ENCODE measurements at regions of chr11 and their contacts with region 1.

Region 1: GRCh38 chr11:2885676-2886081 is at the start of gene CDKN1C:
- DNase-seq: peak; percentile 92 to 97
- H3K4me3 ChIP-seq: peak within 1 kb of the TSS; percentile 86 to 90 (median 86)
- H3K27ac ChIP-seq: peak within 1 kb of the TSS; percentile 84 to 92 (median 87)
- H3K4me1 ChIP-seq: peaks cover 9 to 66% (median 58%) of the 10 kb centered on the region in 4 donors
- H3K27me3 ChIP-seq: peaks cover 0 to 19% (median 3%) of the 10 kb centered on the region in 3 donors
- CTCF ChIP-seq: no peak
- EP300 ChIP-seq: no peak
- POLR2A ChIP-seq: peak in 2 of 4 donors; percentile 47 to 57
- total RNA-seq, gene CDKN1C: 10.5 to 99.1 (median 14.2) TPM

Region 2: GRCh38 chr11:2041153-2041552 is 844.5 kb before region 1 on chr11:
- intact Hi-C with region 1: no loop called
- DNase-seq: no peak
- H3K4me3 ChIP-seq: no peak overlapping the region
- H3K27ac ChIP-seq: no peak overlapping the region
- H3K4me1 ChIP-seq: no peaks in the 10 kb centered on the region
- H3K27me3 ChIP-seq: peaks cover 0 to 8% (median 0%) of the 10 kb centered on the region in 3 donors
- CTCF ChIP-seq: no peak
- EP300 ChIP-seq: no peak
- POLR2A ChIP-seq: no peak

Region 3: DNA sequence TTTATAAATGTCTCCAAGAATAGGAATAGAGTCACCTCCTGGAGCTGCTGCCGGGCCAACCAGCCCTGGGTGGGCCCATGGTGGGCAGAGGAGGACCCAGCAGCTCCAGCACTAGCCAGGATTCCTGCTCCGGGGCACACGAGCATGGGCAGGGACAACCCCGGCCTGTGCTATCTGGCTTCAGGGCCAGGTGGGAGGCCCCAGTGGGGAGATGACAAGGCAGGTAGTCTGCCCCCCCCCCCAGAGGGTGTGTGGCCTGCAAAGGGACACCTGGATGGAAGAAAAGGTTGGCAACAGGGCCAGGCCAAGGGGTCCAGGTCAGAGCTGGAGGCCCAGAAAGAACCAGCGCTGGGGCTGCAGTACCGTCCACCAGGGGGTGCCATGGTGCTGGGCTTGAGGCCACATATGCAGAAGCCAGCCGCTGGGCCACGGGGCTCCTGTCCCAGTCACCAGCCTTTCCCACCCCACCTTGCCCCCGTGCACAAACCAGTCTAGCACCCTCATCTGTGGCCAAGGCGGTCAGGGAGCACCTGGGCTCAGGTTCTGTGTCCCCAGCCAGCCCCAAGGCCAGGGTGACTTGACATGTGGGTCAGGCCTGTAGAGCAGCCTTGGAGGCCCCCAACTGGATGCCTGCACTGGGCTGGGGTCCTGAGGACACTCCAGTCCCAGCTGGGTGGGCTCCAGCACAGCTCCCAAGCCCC is 580.4 kb before region 1 on chr11:
- intact Hi-C with region 1: loop called (anchors 10 kb)
- DNase-seq: peak; percentile 91 to 92
- H3K4me3 ChIP-seq: peak overlapping the region in 2 of 4 donors; percentile 5 to 18
- H3K27ac ChIP-seq: peak overlapping the region; percentile 37 to 89 (median 81)
- H3K4me1 ChIP-seq: peaks cover 54 to 78% (median 60%) of the 10 kb centered on the region in 4 donors
- H3K27me3 ChIP-seq: no peaks in the 10 kb centered on the region
- CTCF ChIP-seq: peak in 6 of 7 experiments; percentile 22 to 98 (median 89)
- EP300 ChIP-seq: no peak
- POLR2A ChIP-seq: no peak

Region 4: GRCh38 chr11:2428322-2428795 is 457.3 kb before region 1 on chr11:
- intact Hi-C with region 1: loop called (anchors 5 kb)
- DNase-seq: peak; percentile 86 to 90
- H3K4me3 ChIP-seq: no peak overlapping the region
- H3K27ac ChIP-seq: no peak overlapping the region
- H3K4me1 ChIP-seq: peaks cover 0 to 18% (median 10%) of the 10 kb centered on the region in 4 donors
- H3K27me3 ChIP-seq: peaks cover 0 to 7% (median 0%) of the 10 kb centered on the region in 3 donors
- CTCF ChIP-seq: peak in 6 of 7 experiments; percentile 10 to 99 (median 90)
- EP300 ChIP-seq: no peak
- POLR2A ChIP-seq: peak in 1 of 4 donors; percentile 92

Region 5: GRCh38 chr11:2533587-2534133 is 352.0 kb before region 1 on chr11:
- intact Hi-C with region 1: loop called (anchors 2 kb)
- DNase-seq: peak; percentile 55 to 94
- H3K4me3 ChIP-seq: peak overlapping the region in 1 of 4 donors; percentile 32
- H3K27ac ChIP-seq: peak overlapping the region in 3 of 5 donors; percentile 41 to 64 (median 49)
- H3K4me1 ChIP-seq: peaks cover 17 to 39% (median 33%) of the 10 kb centered on the region in 4 donors
- H3K27me3 ChIP-seq: no peaks in the 10 kb centered on the region
- CTCF ChIP-seq: no peak
- EP300 ChIP-seq: no peak
- POLR2A ChIP-seq: no peak

Measured in stomach (tissue), 19 donors.